Mammary epithelial cell (primary cell): ENCODE measurements at regions of chr20 and their contacts with region 1.

Region 1: GRCh38 chr20:61030130-61030529 is 221.9 kb upstream of the CDH4 start:
- DNase-seq: no peak
- H3K4me3 ChIP-seq: no peak overlapping the region
- H3K27ac ChIP-seq: no peak overlapping the region
- H3K4me1 ChIP-seq: no peaks in the 10 kb centered on the region
- H3K27me3 ChIP-seq: peaks cover 9% of the 10 kb centered on the region
- CTCF ChIP-seq: no peak

Region 2: GRCh38 chr20:60518022-60518421 is 512.1 kb before region 1 on chr20:
- CTCF ChIA-PET with region 1: no interaction called
- dilution Hi-C with region 1: no loop called
- in situ Hi-C with region 1: no loop called
- intact Hi-C with region 1: no loop called
- DNase-seq: no peak
- H3K4me3 ChIP-seq: no peak overlapping the region
- H3K27ac ChIP-seq: no peak overlapping the region
- H3K4me1 ChIP-seq: peaks cover 3% of the 10 kb centered on the region
- H3K27me3 ChIP-seq: peaks cover 2% of the 10 kb centered on the region
- CTCF ChIP-seq: no peak

Region 3: GRCh38 chr20:61135968-61136367 is 105.8 kb after region 1 on chr20:
- CTCF ChIA-PET with region 1: no interaction called
- dilution Hi-C with region 1: loop called (anchors 5 kb)
- in situ Hi-C with region 1: no loop called
- intact Hi-C with region 1: no loop called
- DNase-seq: no peak
- H3K4me3 ChIP-seq: no peak overlapping the region
- H3K27ac ChIP-seq: no peak overlapping the region
- H3K4me1 ChIP-seq: no peaks in the 10 kb centered on the region
- H3K27me3 ChIP-seq: peaks cover 8% of the 10 kb centered on the region
- CTCF ChIP-seq: no peak

Region 4: DNA sequence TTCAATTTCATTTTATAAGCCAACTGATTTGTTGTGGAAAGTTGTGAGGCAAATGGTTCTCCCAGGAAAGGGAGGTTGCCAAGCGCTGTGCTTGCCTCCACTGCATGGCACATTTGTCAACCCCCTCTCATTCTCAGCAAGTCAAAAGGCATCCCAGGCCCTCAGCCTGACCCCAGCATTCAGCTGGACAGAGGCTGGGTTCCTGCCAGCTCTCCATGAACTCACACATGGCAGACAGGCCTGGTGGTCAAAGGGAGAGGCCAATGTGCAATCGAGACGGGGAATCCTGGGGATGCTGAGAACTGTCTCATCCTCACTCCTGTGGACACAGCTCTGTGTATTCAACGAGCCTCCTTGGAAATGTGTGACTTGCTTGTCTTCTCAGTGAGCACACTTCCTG is 115.9 kb after region 1 on chr20:
- CTCF ChIA-PET with region 1: no interaction called
- dilution Hi-C with region 1: no loop called
- in situ Hi-C with region 1: no loop called
- intact Hi-C with region 1: no loop called
- DNase-seq: no peak
- H3K4me3 ChIP-seq: no peak overlapping the region
- H3K27ac ChIP-seq: no peak overlapping the region
- H3K4me1 ChIP-seq: no peaks in the 10 kb centered on the region
- H3K27me3 ChIP-seq: peaks cover 4% of the 10 kb centered on the region
- CTCF ChIP-seq: no peak